MCF 10A (cell line): ENCODE measurements at regions of chr3 and their contacts with region 1.

Region 1: DNA sequence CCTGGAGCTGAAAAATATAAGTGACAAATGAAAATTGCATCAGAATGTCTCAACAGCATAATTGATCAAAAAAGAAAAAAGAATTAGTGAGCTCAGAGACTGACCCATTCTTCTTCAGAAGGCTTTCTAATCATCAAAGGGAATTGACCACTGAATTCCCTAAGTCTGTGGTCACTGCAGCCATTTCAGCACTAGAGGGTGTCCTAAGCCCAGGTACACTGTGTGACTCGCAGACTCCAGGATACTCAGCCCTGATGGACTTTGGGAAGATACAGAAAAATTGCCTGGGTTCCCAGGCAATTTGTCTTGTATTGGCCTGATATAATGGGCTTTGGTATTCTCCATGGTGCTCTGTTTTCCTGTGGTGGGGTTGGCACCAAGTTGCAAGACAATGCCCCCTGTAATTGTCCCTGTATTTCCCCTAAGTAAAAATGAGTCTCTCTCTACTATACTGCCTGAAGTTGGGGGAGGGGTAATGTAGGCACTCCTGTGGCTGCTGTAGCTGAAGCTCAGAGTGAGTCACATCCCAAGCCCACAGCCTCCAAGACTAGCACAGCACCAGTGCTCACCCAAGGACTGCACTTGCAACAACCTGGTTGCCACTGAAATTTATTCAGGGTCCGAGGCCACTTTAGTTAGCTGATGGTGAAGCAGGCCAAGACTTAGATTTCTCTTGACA is 256.0 kb upstream of the STAC start:
- DNase-seq: peak; percentile 74
- H3K4me3 Mint-ChIP-seq: no peak overlapping the region
- H3K27ac Mint-ChIP-seq: no peak overlapping the region
- H3K4me1 Mint-ChIP-seq: no peaks in the 10 kb centered on the region
- H3K27me3 Mint-ChIP-seq: no peaks in the 10 kb centered on the region
- CTCF ChIP-seq: peak; percentile 87

Region 2: GRCh38 chr3:35974872-35975271 is 149.4 kb before region 1 on chr3:
- CTCF ChIA-PET with region 1: no interaction called
- POLR2A ChIA-PET with region 1: no interaction called
- intact Hi-C with region 1: no loop called
- DNase-seq: no peak
- H3K4me3 Mint-ChIP-seq: no peak overlapping the region
- H3K27ac Mint-ChIP-seq: no peak overlapping the region
- H3K4me1 Mint-ChIP-seq: no peaks in the 10 kb centered on the region
- H3K27me3 Mint-ChIP-seq: peaks cover 55% of the 10 kb centered on the region
- CTCF ChIP-seq: no peak

Region 3: DNA sequence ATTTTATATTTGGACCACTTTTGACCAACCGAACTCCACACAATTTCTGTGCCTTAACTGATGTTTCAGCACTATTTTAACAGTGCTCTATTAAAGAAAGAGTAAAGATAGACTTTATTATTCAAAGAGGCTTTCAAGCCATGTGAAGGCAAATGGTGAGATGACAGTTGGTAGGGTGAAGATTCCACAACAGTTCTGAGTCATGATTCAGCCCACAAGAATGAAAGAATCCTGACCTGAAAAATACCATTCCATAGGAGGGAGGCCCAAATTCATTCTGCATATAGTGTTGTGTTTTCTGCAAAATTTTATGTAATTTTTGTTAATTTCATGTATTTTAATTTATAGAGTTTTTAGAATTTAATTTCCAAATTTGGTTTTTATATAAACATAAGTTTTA is 120.5 kb after region 1 on chr3:
- CTCF ChIA-PET with region 1: interaction called, 3 read pairs
- POLR2A ChIA-PET with region 1: no interaction called
- intact Hi-C with region 1: loop called (anchors 10 kb)
- DNase-seq: peak; percentile 21
- H3K4me3 Mint-ChIP-seq: no peak overlapping the region
- H3K27ac Mint-ChIP-seq: no peak overlapping the region
- H3K4me1 Mint-ChIP-seq: no peaks in the 10 kb centered on the region
- H3K27me3 Mint-ChIP-seq: no peaks in the 10 kb centered on the region
- CTCF ChIP-seq: no peak

Region 4: GRCh38 chr3:36362967-36363366 is 238.7 kb after region 1 on chr3:
- CTCF ChIA-PET with region 1: no interaction called
- POLR2A ChIA-PET with region 1: no interaction called
- intact Hi-C with region 1: loop called (anchors 10 kb)
- DNase-seq: peak; percentile 75
- H3K4me3 Mint-ChIP-seq: no peak overlapping the region
- H3K27ac Mint-ChIP-seq: peak overlapping the region; percentile 33
- H3K4me1 Mint-ChIP-seq: peaks cover 16% of the 10 kb centered on the region
- H3K27me3 Mint-ChIP-seq: no peaks in the 10 kb centered on the region
- CTCF ChIP-seq: no peak

Region 5: GRCh38 chr3:36540888-36541518 is 416.7 kb after region 1 on chr3:
- CTCF ChIA-PET with region 1: interaction called, 11 read pairs
- POLR2A ChIA-PET with region 1: no interaction called
- intact Hi-C with region 1: loop called (anchors 1 kb)
- DNase-seq: peak; percentile 50
- H3K4me3 Mint-ChIP-seq: no peak overlapping the region
- H3K27ac Mint-ChIP-seq: no peak overlapping the region
- H3K4me1 Mint-ChIP-seq: no peaks in the 10 kb centered on the region
- H3K27me3 Mint-ChIP-seq: no peaks in the 10 kb centered on the region
- CTCF ChIP-seq: peak; percentile 91

Region 6: GRCh38 chr3:36707623-36708409 is 583.6 kb after region 1 on chr3:
- CTCF ChIA-PET with region 1: interaction called, 18 read pairs
- POLR2A ChIA-PET with region 1: no interaction called
- intact Hi-C with region 1: no loop called
- DNase-seq: peak; percentile 76
- H3K4me3 Mint-ChIP-seq: no peak overlapping the region
- H3K27ac Mint-ChIP-seq: no peak overlapping the region
- H3K4me1 Mint-ChIP-seq: peaks cover 6% of the 10 kb centered on the region
- H3K27me3 Mint-ChIP-seq: no peaks in the 10 kb centered on the region
- CTCF ChIP-seq: peak; percentile 30